CD4-positive, alpha-beta T cell (primary cell): ENCODE measurements at regions of chrX and their contacts with region 1.

Region 1: GRCh38 chrX:38985375-38985774 is 184.1 kb downstream of the MID1IP1 start:
- DNase-seq: peak in 4 of 14 experiments; percentile 3 to 47 (median 41)
- ATAC-seq: no peak
- H3K4me3 ChIP-seq: no peak overlapping the region
- H3K4me3 Mint-ChIP-seq: no peak overlapping the region
- H3K27ac ChIP-seq: no peak overlapping the region
- H3K27ac Mint-ChIP-seq: no peak overlapping the region
- H3K4me1 ChIP-seq: no peaks in the 10 kb centered on the region
- H3K4me1 Mint-ChIP-seq: peaks cover 6% of the 10 kb centered on the region
- H3K27me3 ChIP-seq: no peaks in the 10 kb centered on the region
- H3K27me3 Mint-ChIP-seq: no peaks in the 10 kb centered on the region
- CTCF ChIP-seq: peak; percentile 42

Region 2: GRCh38 chrX:39149761-39150160 is 164.4 kb after region 1 on chrX:
- CTCF ChIA-PET with region 1: no interaction called
- POLR2A ChIA-PET with region 1: no interaction called
- intact Hi-C with region 1: loop called in 1 of 2 experiments (anchors 5 kb)
- DNase-seq: peak; percentile 39 to 74 (median 50)
- ATAC-seq: no peak
- H3K4me3 ChIP-seq: no peak overlapping the region
- H3K4me3 Mint-ChIP-seq: no peak overlapping the region
- H3K27ac ChIP-seq: no peak overlapping the region
- H3K27ac Mint-ChIP-seq: no peak overlapping the region
- H3K4me1 ChIP-seq: no peaks in the 10 kb centered on the region
- H3K4me1 Mint-ChIP-seq: peaks cover 3% of the 10 kb centered on the region
- H3K27me3 ChIP-seq: no peaks in the 10 kb centered on the region
- H3K27me3 Mint-ChIP-seq: no peaks in the 10 kb centered on the region
- CTCF ChIP-seq: peak; percentile 66